Stomach (tissue), 19 donors: ENCODE measurements at regions of chr9 and their contacts with region 1.

Region 1: DNA sequence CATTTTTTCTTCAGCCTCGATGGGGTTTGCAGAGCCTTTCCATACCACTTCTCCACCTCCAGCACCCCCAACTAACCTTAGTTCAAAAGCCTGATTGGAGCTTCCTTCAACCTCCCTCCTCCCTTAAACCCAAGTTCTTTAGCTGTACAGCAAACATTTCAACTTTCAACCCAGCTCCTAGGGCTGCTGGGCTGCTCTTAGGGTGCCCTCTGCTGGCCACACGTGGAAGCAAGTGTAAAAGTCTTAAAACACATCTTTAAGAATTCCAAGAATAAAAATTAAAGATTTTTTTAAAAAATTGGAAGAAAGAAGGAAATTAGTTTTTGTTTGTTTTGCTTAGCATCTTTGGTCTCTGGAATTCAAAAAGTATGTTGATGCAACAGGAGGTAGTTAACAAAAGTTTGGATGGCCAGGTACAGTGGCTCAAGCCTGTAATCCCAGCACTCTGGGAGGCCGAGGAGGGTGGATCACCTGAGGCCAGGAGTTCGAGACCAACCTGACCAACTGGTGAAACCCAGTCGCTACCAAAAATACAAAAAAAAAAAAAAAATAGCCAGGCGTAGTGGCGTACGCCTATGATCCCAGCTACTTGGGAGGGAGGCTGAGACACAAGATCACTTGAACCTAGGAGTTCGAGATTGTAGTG is 15.5 kb upstream of the HSD17B3 start:
- DNase-seq: peak; percentile 59 to 85
- H3K4me3 ChIP-seq: no peak overlapping the region
- H3K27ac ChIP-seq: no peak overlapping the region
- H3K4me1 ChIP-seq: no peaks in the 10 kb centered on the region
- H3K27me3 ChIP-seq: no peaks in the 10 kb centered on the region
- CTCF ChIP-seq: peak in 5 of 7 experiments; percentile 37 to 81 (median 69)
- EP300 ChIP-seq: no peak
- POLR2A ChIP-seq: no peak

Region 2: DNA sequence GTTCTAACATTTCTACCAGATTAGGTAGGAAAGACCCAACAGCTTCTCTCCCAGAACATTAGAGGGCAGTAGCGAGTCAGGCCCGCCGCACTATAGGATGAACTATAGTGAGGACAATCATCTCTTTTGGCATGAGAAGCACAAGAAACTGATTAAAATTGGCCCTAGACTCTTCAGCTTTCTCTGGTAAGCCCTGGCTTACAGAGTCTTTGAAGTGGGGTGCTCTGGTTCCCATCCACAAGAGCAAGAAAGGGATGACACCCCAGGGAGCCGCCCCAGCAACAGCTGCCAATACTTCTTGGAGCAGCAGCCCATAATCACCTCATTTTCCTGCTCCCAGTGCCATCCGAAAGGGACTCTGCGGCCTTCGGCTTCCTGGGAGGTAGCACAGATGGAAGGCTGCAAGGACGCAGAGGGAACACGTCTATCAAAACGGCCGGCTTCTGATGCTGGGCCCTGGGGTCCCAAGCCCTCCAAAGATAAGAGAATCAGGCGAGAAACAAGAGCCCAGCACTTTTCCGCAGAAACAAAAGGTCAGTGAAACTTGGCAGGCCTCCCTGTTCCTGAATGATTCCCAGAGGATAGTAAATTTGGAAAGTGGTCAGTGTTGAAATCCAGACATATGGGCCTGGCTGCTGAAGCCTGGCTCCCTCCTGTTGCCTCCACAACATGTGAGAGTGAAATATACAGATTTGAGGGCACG is 84.8 kb before region 1 on chr9:
- intact Hi-C with region 1: loop called (anchors 10 kb)
- DNase-seq: peak in 1 of 2 donors; percentile 84
- H3K4me3 ChIP-seq: peak overlapping the region in 1 of 4 donors; percentile 4
- H3K27ac ChIP-seq: peak overlapping the region; percentile 66 to 79 (median 66)
- H3K4me1 ChIP-seq: peaks cover 0 to 17% (median 12%) of the 10 kb centered on the region in 4 donors
- H3K27me3 ChIP-seq: no peaks in the 10 kb centered on the region
- CTCF ChIP-seq: peak in 5 of 7 experiments; percentile 44 to 82 (median 67)
- EP300 ChIP-seq: no peak
- POLR2A ChIP-seq: no peak